Aorta (tissue), 5 donors: ENCODE measurements at regions of chr1 and their contacts with region 1.

Region 1: GRCh38 chr1:228734881-228735801 is at the start of gene RHOU:
- DNase-seq: peak; percentile 90 to 94
- ATAC-seq: peak; percentile 94
- H3K4me3 ChIP-seq: peak within 1 kb of the TSS; percentile 85 to 98
- H3K27ac ChIP-seq: peak within 1 kb of the TSS; percentile 79 to 95
- H3K4me1 ChIP-seq: peaks cover 0 to 5% of the 10 kb centered on the region in 2 donors
- H3K27me3 ChIP-seq: no peaks in the 10 kb centered on the region
- total RNA-seq, gene RHOU: 30.3 to 32.5 TPM

Region 2: GRCh38 chr1:228664399-228664914 is 70.7 kb before region 1 on chr1:
- intact Hi-C with region 1: loop called (anchors 2 to 5 kb)
- DNase-seq: peak; percentile 81 to 88
- ATAC-seq: peak; percentile 65
- H3K4me3 ChIP-seq: no peak overlapping the region
- H3K27ac ChIP-seq: no peak overlapping the region
- H3K4me1 ChIP-seq: peaks cover 0 to 2% of the 10 kb centered on the region in 2 donors
- H3K27me3 ChIP-seq: no peaks in the 10 kb centered on the region

Region 3: DNA sequence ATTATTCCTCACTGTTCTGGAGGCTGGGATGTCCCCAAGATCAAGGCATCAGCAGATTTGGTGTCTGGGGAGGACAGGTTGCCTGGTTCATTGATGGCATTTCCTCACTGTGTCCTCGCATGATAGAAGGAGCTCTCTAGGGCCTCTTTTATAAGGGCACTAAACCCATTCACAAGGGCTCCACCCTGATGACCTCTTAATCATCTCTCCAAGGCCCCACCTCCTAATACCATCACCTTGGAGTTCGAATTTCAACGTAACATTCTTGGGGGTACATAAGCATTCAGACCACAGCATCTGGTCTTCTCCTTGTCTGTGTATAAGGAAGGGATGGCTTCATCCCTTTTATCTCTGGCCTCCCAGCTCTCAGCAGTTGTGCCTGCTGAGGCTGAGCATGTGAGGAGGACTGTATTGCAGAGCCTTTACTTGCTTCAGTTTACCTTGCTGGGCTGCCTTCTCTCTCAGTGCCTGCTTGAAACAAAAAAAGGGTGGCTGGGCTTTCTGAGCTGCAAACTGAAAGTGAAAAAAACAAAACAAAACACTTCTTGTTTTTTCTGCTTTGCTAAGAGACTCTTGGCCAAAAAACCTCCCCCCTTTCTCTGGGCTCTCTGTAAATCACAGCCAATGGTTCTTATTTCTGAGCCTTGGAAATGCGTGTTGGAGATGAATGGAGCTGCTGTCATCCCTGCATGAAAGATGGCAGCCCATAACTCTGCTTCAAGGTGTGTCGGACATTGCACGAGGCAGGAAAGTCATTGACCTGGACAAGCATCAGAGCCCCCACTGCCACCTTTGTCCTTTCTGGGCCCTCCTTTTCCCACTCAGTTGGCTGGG is 76.0 kb after region 1 on chr1:
- intact Hi-C with region 1: no loop called
- DNase-seq: no peak
- ATAC-seq: peak; percentile 9
- H3K4me3 ChIP-seq: no peak overlapping the region
- H3K27ac ChIP-seq: no peak overlapping the region
- H3K4me1 ChIP-seq: no peaks in the 10 kb centered on the region
- H3K27me3 ChIP-seq: no peaks in the 10 kb centered on the region

Region 4: DNA sequence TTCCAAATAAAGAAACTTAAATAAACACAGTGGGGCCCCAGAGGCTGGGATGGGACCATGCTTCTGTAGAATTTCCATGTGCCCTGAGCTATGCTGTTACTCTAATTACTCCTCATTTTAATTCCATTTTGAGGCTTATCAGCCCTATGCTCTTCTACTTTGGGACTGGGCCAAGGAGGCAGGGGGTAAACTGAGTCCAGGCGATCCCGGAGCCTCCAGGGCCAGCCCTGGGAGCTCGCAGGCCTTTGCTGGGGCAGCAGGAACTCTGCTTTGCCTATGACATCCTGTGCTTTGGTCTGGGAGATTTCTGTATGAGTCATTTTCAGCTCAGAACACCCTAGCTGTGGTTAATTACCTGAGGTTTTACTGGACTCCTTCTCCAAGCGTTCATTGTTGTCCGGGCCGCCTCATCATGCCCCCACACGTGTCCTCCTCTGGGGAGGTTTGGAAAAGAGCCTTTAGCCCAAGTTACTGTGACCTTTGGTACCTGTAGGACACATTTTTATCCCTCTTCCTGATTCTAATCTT is 95.9 kb after region 1 on chr1:
- intact Hi-C with region 1: loop called in 1 of 2 experiments (anchors 5 kb)
- DNase-seq: no peak
- ATAC-seq: no peak
- H3K4me3 ChIP-seq: no peak overlapping the region
- H3K27ac ChIP-seq: no peak overlapping the region
- H3K4me1 ChIP-seq: no peaks in the 10 kb centered on the region
- H3K27me3 ChIP-seq: no peaks in the 10 kb centered on the region

Region 5: GRCh38 chr1:228921481-228921880 is 186.3 kb after region 1 on chr1:
- intact Hi-C with region 1: loop called in 1 of 2 experiments (anchors 5 kb)
- DNase-seq: peak; percentile 61 to 67
- ATAC-seq: no peak
- H3K4me3 ChIP-seq: no peak overlapping the region
- H3K27ac ChIP-seq: no peak overlapping the region
- H3K4me1 ChIP-seq: peaks cover 0 to 4% of the 10 kb centered on the region in 2 donors
- H3K27me3 ChIP-seq: no peaks in the 10 kb centered on the region

Region 6: DNA sequence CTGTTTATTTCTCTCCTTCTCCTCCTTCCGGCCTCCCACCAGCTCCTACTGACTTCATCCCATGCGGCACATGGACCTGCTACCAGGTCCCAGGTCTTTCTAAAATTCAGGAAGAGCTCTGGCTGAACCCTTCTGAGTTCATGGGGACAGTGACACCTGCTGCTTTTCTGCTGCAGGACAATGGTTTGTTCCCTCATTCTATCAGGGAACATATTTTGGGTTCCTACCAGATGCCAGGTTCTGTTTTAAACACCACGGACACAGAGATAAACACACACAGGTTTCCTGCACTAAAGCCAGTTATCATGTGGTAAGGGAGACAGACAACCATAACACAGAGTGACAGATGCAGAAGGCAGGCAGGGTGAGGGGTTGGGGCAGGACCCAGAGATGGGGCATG is 421.7 kb after region 1 on chr1:
- intact Hi-C with region 1: loop called (anchors 2 kb)
- DNase-seq: no peak
- ATAC-seq: peak; percentile 79
- H3K4me3 ChIP-seq: no peak overlapping the region
- H3K27ac ChIP-seq: no peak overlapping the region
- H3K4me1 ChIP-seq: no peaks in the 10 kb centered on the region
- H3K27me3 ChIP-seq: no peaks in the 10 kb centered on the region